ENCODE measurements at regions of chr17 and their contacts with region 1.

Region 1: GRCh38 chr17:16380640-16381495 is at the start of gene UBB:
- DNase-seq: peak; percentile 92 to 100
- ATAC-seq: peak; percentile 93
- H3K4me3 ChIP-seq: peak within 1 kb of the TSS; percentile 88
- H3K27ac ChIP-seq: peak within 1 kb of the TSS; percentile 91 to 95
- H3K4me1 ChIP-seq: peaks cover 43% of the 10 kb centered on the region
- CTCF ChIP-seq: no peak
- EP300 ChIP-seq: peak; percentile 12 to 56; a peak in 2 of 5 replicates
- POLR2A ChIP-seq: peak; percentile 100
- RAD21 ChIP-seq: no peak
- polyA plus RNA-seq, gene UBB: 2,851 and 4,311 TPM in 2 replicates

Region 2: GRCh38 chr17:16232391-16232790 is 148.5 kb before region 1 on chr17:
- CTCF ChIA-PET with region 1: no interaction called
- POLR2A ChIA-PET with region 1: no interaction called
- DNase-seq: no peak
- ATAC-seq: no peak
- H3K4me3 ChIP-seq: no peak overlapping the region
- H3K27ac ChIP-seq: no peak overlapping the region
- H3K4me1 ChIP-seq: peaks cover 5% of the 10 kb centered on the region; the same call in 2 of the 3 replicates
- CTCF ChIP-seq: no peak
- EP300 ChIP-seq: no peak
- POLR2A ChIP-seq: no peak
- RAD21 ChIP-seq: no peak

Region 3: DNA sequence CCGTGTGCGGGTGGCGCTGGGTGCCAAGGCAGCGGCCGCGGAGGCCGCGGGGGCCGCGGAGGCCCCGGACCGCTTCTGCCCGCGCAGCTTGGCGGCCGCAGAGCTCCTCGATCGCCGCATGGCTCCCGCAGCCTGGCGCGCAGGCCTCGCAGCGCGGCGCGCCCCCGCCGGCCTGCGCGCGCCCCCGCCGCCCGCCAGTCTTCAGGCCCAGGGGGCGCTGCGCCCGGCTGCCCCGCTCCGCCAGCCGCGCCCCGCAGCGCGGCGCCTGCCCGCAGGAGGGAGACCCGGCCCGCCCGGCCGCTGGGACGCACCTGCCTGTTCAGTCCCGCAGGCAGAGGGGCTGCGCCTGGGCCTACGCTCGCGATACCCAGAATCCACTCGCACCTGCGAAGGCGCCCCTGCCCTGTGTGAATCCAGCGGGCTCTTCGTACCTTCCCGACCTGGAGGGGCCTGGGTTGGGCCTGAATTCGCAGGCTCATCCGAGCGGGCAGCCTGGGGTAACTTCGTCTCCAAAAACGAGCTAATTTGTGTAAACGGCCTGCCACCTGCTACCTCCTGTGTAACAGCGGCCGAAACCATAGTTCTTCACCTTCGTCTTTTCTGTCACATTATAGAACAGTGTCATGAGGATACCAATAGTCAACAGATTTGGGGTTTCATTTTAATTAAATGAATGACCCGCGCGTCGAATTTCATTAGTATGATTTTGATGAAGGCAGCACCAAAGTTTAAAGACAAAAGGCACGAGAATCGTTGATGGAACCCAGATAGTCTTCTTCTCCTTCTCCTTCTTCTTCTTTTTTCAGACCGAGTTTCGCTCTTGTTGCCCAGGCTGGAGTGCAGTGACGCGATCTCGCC is 27.3 kb before region 1 on chr17 and contains the start of gene CENPV:
- CTCF ChIA-PET with region 1: interaction called, 35 read pairs
- POLR2A ChIA-PET with region 1: interaction called, 39 read pairs
- DNase-seq: peak; percentile 72 to 91
- ATAC-seq: peak; percentile 80 to 89
- H3K4me3 ChIP-seq: peak within 1 kb of the TSS; percentile 71
- H3K27ac ChIP-seq: peak within 1 kb of the TSS; percentile 87 to 96
- H3K4me1 ChIP-seq: peaks cover 12% of the 10 kb centered on the region
- CTCF ChIP-seq: peak; percentile 78
- EP300 ChIP-seq: no peak
- POLR2A ChIP-seq: peak; percentile 82
- RAD21 ChIP-seq: no peak
- polyA plus RNA-seq, gene CENPV: 191 and 202 TPM in 2 replicates

Region 4: GRCh38 chr17:16415031-16415924 is 34.4 kb after region 1 on chr17 and contains the start of gene TRPV2:
- CTCF ChIA-PET with region 1: interaction called, 7 read pairs
- POLR2A ChIA-PET with region 1: interaction called, 15 read pairs
- DNase-seq: peak; percentile 53 to 55
- ATAC-seq: peak; percentile 40 to 81; a peak in 3 of 6 replicates
- H3K4me3 ChIP-seq: no peak within 1 kb of the TSS
- H3K27ac ChIP-seq: peak within 1 kb of the TSS in 1 of 2 experiments; percentile 39; a peak in 3 of 6 replicates
- H3K4me1 ChIP-seq: peaks cover 22% of the 10 kb centered on the region
- CTCF ChIP-seq: peak; percentile 46
- EP300 ChIP-seq: no peak
- POLR2A ChIP-seq: no peak
- RAD21 ChIP-seq: peak; percentile 29 to 55; a peak in 4 of 5 replicates
- polyA plus RNA-seq, gene TRPV2: 0.31 and 0.60 TPM in 2 replicates

Region 5: DNA sequence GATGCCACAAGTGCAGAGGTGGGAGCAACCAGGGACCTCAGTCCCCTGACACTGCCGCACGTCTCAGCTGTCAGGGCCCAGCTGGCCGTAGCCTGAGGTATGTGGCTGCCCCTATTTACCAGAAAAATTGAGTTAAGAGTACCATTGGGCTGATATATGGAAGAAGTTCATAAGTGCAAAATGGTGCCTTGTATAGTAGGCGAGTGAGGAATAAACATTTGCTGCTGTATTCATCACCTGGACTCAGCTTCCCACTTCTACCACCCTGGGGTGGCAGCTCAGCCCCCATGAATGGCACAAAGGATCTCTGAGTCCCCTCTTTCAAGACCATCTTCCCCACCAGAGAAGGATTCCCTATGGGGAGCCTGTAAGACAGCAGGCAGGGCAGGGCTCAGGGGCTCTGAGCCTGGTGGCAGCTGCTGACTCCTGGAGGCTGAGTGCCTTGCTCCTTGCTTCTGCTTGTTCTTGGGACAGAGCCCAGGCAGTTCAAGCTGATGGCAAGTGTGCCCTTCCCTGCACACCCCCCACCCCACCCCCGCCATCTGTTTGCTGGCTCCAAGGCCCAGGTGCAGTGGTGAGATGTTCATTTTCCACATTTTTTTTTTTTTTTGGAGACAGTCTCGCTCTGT is 63.5 kb after region 1 on chr17:
- CTCF ChIA-PET with region 1: interaction called, 7 read pairs
- POLR2A ChIA-PET with region 1: interaction called, 57 read pairs
- DNase-seq: peak in 1 of 2 experiments; percentile 37
- ATAC-seq: peak; percentile 19 to 28; a peak in 4 of 6 replicates
- H3K4me3 ChIP-seq: no peak overlapping the region
- H3K27ac ChIP-seq: peak overlapping the region in 1 of 2 experiments; percentile 99; a peak in 3 of 6 replicates
- H3K4me1 ChIP-seq: peaks cover 48% of the 10 kb centered on the region
- CTCF ChIP-seq: no peak
- EP300 ChIP-seq: no peak
- POLR2A ChIP-seq: no peak
- RAD21 ChIP-seq: no peak

Region 6: GRCh38 chr17:16484445-16485175 is 103.7 kb after region 1 on chr17:
- CTCF ChIA-PET with region 1: no interaction called
- POLR2A ChIA-PET with region 1: no interaction called
- DNase-seq: no peak
- ATAC-seq: no peak
- H3K4me3 ChIP-seq: no peak overlapping the region
- H3K27ac ChIP-seq: no peak overlapping the region
- H3K4me1 ChIP-seq: peaks cover 9% of the 10 kb centered on the region; the same call in 2 of the 3 replicates
- CTCF ChIP-seq: no peak
- EP300 ChIP-seq: no peak
- POLR2A ChIP-seq: no peak
- RAD21 ChIP-seq: no peak

Measured in A549 (cell line).